AG04449 (cell line): ENCODE measurements at regions of chr5 and their contacts with region 1.

Region 1: DNA sequence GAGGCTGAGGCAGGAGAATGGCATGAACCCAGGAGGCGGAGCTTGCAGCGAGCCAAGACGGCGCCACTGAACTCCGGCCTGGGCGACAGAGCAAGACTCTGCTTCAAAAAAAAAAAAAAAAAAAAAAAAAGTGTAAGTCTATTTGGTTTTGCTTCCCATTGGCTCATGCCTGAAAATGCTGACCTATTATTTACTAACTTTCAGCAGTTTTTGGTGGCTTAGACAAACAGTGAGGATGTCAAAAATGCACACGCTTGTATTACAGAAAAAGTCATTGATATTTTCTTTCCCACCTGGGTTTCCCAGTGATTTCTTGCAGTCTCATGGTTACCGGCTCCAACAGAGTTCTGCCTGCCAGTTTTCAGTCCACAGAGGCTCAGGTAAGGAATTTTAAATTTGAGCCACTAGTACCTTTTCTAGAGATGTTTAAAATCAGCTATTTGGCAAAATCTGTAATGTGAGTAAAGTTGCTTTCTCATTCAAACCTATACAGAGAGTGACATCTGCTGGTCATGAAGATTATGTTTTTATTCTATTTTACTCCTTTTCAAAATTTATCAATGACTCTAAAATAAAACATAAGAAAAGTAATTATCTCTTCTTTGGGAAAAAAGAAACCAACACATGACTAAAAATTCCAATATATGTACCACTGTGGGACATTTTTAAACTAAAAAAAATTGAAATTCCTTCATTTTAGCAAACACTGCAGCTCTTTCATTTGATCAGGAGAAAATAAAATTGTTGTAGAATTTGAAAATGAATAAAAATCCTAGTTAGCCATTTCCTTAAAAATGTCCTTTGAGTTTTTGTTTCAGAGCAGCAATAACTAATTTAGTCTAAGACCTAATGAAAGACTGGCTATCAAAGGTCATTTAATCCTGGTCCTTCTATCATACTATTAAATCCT is 8.8 kb downstream of the FAM200C start:
- DNase-seq: no peak
- H3K4me3 ChIP-seq: no peak overlapping the region
- CTCF ChIP-seq: peak; percentile 25

Region 2: DNA sequence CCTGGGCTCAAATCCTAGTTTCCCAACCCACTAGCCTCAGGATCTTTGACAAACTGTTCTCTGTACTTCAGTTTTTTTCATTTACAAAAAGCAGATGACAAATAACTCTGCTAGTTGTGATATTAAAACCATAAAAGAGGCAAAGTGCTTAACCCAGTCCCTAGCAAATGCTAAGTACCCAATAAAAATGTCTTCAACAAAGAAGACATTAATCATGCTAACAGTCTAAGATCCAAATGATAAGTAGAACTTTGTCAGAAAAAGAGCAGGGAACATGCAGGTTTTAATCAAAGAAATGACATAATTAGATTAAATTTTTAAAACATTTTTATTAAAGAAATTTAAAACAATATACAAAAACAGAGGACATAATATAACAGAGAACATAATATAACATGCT is 677.8 kb before region 1 on chr5:
- CTCF ChIA-PET with region 1: no interaction called
- POLR2A ChIA-PET with region 1: no interaction called
- DNase-seq: no peak
- H3K4me3 ChIP-seq: no peak overlapping the region
- CTCF ChIP-seq: no peak

Region 3: DNA sequence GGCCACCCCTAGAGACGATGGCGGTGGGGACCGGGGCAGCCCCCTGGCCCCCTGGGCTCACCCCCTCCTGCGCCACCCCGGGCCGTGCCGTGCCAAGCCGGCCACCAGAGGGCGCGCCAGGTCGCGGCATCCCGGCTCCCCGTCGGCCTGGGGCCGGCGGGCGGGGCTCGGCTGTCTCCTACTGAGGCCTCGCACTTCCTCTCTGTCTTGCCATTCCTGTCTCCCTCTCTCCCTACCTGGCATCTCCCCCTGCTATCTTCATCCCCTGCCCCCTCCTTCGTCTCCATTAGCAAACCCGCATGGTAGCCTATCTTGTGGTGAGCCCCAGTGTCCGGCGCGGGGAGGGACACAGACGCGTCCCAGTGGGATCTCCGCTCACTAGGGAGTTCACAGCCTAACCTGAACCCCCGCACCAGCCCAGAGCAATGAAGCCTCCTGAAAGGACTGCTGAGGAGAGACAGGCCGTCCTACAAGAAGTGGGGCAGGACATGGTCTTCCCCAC is 191.6 kb before region 1 on chr5:
- CTCF ChIA-PET with region 1: interaction called, 18 read pairs
- POLR2A ChIA-PET with region 1: no interaction called
- DNase-seq: no peak
- H3K4me3 ChIP-seq: peak overlapping the region; percentile 50
- CTCF ChIP-seq: peak; percentile 82

Region 4: GRCh38 chr5:160369990-160370712 is 20.9 kb before region 1 on chr5 and contains the start of gene C1QTNF2:
- CTCF ChIA-PET with region 1: interaction called, 16 read pairs
- POLR2A ChIA-PET with region 1: no interaction called
- DNase-seq: no peak
- H3K4me3 ChIP-seq: peak within 1 kb of the TSS; percentile 63
- CTCF ChIP-seq: no peak

Region 5: DNA sequence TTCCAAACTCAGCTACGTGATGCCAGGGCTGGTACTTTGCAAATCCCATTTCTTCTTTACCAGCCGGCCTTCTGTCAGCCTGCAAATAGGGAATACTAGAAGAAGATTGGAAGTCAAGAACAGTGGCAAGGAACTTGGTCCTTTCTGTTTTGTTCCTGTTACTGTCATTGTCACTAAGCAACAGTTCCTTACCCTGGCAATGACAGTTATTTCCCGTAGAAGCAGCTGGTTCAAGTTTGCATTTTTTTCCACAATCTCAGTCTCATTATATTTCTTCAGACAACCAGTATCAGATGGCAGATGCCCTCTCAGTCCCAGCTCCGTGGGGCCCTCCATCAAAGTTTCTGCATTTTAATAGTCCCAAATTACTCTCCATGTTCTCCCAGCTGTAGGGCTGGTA is 11.5 kb before region 1 on chr5:
- CTCF ChIA-PET with region 1: interaction called, 17 read pairs
- POLR2A ChIA-PET with region 1: no interaction called
- DNase-seq: no peak
- H3K4me3 ChIP-seq: no peak overlapping the region
- CTCF ChIP-seq: no peak